Activated CD8-positive, alpha-beta T cell treated with anti-CD3 and anti-CD28 coated beads, Interleukin-2, amount 10 ng/mL, durations not matched to agents 7 days and 5 days (primary cell): ENCODE measurements at regions of chr19 and their contacts with region 1.

Region 1: GRCh38 chr19:48363810-48364563 is at the starts of genes SYNGR4 and TMEM143:
- DNase-seq: peak; percentile 99
- ATAC-seq: peak; percentile 94
- H3K4me3 Mint-ChIP-seq: peak within 1 kb of the TSS; percentile 86
- H3K27ac Mint-ChIP-seq: peak within 1 kb of the TSS; percentile 97
- H3K4me1 Mint-ChIP-seq: peaks cover 21% of the 10 kb centered on the region
- H3K27me3 Mint-ChIP-seq: no peaks in the 10 kb centered on the region
- total RNA-seq, gene SYNGR4: not detected
- total RNA-seq, gene TMEM143: 17.1 to 19.4 TPM

Region 2: DNA sequence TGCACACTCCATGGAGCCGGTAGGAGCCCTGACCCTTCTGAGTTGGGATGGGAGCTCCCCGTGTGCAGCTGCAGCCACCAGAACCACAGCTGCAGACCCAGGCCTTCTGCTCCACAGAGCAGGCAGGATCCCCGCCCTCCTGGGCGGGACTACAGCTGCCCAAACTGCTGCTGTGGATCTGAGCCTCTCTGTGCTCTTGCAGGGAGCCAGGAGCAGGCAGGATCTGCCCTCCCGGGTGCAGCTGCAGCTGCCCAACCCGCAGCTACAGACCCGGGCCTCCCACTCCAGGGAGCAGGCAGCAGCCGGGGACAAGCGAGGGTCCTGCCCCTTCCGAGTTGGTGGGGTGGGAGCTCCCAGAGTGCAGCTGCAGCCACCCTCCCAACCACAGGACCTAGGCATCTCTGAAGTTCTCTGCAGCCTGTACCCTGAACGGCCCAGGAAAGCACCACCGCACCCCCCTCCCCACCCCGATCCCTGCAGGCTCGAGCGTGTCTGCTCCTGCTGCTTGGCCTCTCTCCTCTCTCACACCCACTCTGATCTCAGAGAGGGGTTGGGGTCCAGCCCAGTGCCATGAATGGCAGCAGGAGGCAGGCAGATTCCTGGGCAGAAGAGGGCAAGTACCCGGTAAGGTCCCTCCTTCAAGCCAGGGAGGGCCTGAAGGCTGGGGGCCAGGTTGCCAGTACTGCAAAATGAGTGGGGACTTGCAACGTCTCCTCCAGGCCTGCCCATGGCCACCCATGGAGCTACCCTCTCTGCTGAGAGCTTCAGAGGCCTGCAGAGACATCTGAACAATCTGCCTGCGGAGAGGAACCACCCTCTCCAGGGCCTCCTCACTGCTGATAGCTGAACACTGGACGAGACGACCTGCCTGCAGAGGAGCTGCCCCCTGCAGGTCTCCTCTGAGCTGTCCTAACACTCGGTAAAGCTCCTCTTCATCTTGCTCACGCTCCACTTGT is 55.1 kb before region 1 on chr19:
- CTCF ChIA-PET with region 1: interaction called, 10 read pairs
- POLR2A ChIA-PET with region 1: no interaction called
- DNase-seq: no peak
- ATAC-seq: peak; percentile 23
- H3K4me3 Mint-ChIP-seq: no peak overlapping the region
- H3K27ac Mint-ChIP-seq: no peak overlapping the region
- H3K4me1 Mint-ChIP-seq: no peaks in the 10 kb centered on the region
- H3K27me3 Mint-ChIP-seq: no peaks in the 10 kb centered on the region

Region 3: GRCh38 chr19:48351341-48351752 is 12.6 kb before region 1 on chr19:
- CTCF ChIA-PET with region 1: interaction called, 17 read pairs
- POLR2A ChIA-PET with region 1: interaction called, 5 read pairs
- DNase-seq: peak; percentile 88
- ATAC-seq: peak; percentile 99
- H3K4me3 Mint-ChIP-seq: no peak overlapping the region
- H3K27ac Mint-ChIP-seq: no peak overlapping the region
- H3K4me1 Mint-ChIP-seq: peaks cover 6% of the 10 kb centered on the region
- H3K27me3 Mint-ChIP-seq: no peaks in the 10 kb centered on the region

Region 4: DNA sequence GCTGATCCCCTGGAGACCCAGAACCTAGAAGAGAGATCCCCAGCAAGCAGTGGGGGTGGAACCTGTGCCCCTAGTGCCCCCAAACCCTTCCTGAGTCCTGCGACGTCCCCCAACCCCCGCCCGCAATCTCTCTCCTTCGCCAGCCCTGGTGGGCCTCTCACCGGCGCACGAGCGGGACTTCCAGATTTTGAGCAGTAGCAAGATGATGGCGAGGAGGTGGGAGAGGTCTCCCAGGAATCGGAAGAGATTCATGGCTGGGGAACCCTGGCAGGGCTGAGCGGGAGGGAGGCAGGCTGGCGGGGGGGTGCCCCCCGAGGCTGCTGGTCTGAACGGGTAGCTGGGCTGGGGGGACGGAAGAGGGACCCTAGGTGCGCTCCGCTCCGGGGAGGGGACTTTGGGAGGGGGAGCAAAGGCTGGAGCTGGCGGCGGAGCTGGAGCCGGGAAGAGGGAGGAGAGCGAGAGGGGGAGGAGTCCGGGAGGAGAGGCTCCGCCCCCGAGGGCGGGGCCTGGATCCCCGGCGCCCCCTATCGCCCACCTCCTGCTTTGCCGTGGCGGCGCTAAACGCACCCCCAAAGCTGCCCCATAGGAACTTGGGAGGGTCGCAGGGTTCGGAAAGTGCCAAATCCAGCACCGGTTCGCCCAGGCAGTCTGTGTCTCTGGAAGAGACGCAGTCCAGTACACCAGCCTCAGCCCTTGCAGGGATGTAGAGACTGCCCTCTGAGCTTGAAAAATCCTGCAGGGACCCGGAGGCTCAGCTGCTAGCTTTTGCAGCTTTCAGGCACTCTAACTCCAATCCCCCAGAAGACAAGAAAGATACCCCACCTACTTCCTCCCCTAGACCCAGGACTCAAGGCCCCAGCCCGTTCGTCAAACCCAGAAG is 27.4 kb after region 1 on chr19 and contains the start of gene KDELR1:
- CTCF ChIA-PET with region 1: interaction called, 43 read pairs
- POLR2A ChIA-PET with region 1: interaction called, 15 read pairs
- DNase-seq: peak; percentile 76
- ATAC-seq: peak; percentile 81
- H3K4me3 Mint-ChIP-seq: peak within 1 kb of the TSS; percentile 95
- H3K27ac Mint-ChIP-seq: peak within 1 kb of the TSS; percentile 93
- H3K4me1 Mint-ChIP-seq: peaks cover 30% of the 10 kb centered on the region
- H3K27me3 Mint-ChIP-seq: peaks cover 39% of the 10 kb centered on the region
- total RNA-seq, gene KDELR1: 70.3 to 71.3 TPM

Region 5: DNA sequence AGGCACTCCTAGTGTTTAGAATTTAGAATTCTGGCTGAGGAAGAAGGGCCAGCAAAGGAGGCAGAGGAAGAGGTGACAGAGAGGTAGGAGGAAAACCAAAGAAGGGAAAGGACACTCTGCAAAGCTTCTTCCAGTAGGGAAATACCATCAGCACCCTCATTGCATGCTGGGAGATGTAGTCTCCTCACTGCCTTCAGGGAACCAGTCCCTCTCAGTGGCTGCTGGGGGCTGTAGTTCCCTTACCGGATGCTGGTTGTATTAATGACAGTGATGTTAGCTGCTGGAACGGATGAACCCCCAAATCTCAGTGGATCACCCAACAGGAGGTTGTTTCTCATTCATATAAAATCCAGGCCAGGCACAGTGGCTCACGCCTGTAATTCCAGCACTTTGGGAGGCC is 39.6 kb after region 1 on chr19:
- CTCF ChIA-PET with region 1: interaction called, 10 read pairs
- POLR2A ChIA-PET with region 1: no interaction called
- DNase-seq: peak; percentile 83
- ATAC-seq: peak; percentile 76
- H3K4me3 Mint-ChIP-seq: no peak overlapping the region
- H3K27ac Mint-ChIP-seq: peak overlapping the region; percentile 78
- H3K4me1 Mint-ChIP-seq: peaks cover 34% of the 10 kb centered on the region
- H3K27me3 Mint-ChIP-seq: peaks cover 12% of the 10 kb centered on the region